ENCODE measurements at regions of chrX and their contacts with region 1.

Region 1: DNA sequence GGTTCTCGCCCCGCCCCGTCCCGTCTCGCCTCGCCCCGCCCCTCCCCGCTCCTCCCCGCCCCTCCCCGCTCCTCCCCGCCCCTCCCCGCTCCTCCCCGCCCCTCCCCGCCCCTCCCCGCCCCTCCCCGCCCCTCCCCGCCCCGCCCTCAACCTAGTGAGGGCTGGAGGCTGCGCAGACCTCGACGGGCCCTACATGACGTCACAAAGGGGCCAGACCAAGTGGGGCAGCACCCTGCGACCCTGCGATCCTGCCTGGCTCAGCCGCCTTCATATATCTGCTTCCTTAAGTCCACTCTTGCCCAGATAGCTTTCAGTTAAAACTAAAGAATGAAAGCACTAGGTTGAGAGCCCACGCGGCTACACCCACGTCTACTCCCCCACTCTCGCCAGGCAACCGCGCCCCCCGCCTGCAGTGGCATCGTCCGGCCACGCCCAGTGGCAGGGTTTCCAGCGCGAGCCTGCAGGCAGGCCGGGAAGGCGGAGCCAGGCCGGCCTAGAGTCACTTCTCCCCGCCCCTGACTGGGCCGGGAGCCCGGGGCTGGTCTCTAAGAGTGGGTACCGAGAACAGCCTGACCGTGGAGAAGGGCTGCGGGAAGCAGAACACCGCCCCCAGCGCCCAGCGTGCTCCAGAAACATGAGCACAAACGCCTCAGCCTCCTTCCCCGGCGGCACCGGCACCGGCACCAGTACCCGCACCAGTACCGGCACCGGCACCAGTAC is 1.5 kb upstream of the MAOA start:
- DNase-seq: peak; percentile 92
- H3K4me3 ChIP-seq: peak overlapping the region; percentile 46
- H3K4me3 Mint-ChIP-seq: peak overlapping the region; percentile 73
- H3K27ac Mint-ChIP-seq: peak overlapping the region; percentile 94
- H3K4me1 ChIP-seq: no peaks in the 10 kb centered on the region
- H3K4me1 Mint-ChIP-seq: no peaks in the 10 kb centered on the region
- H3K27me3 ChIP-seq: no peaks in the 10 kb centered on the region
- H3K27me3 Mint-ChIP-seq: no peaks in the 10 kb centered on the region
- CTCF ChIP-seq: peak in 1 of 2 experiments; percentile 33

Region 2: DNA sequence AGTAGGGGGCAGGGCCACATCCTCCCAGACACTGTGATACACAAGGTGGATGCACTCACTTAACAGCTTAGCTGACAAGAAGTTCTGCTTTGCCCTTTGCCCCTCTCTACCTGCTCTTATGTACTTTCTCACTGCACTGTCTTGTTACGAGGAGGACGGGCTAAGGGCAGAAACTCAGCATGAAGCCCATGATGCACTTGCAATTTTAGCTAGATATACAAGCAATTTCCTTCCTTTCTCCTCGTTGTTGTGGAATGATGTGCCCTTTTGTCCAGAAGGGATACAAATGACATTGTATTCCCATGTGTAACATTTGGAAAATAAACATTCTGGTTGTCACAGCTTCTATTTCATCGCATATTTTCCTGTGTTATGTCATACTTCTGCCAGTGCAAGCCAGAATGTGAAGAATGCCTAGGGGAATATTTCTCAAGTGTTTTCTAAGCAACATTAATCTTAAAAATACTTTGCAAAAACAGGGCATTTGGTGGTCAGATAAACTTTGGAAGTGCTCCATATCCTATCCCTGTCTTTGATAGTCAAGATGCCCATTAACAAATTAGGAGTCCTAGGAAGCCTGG is 48.7 kb after region 1 on chrX:
- CTCF ChIA-PET with region 1: no interaction called
- POLR2A ChIA-PET with region 1: no interaction called
- intact Hi-C with region 1: loop called (anchors 10 kb)
- DNase-seq: peak; percentile 32 to 46
- H3K4me3 ChIP-seq: no peak overlapping the region
- H3K4me3 Mint-ChIP-seq: peak overlapping the region; percentile 35
- H3K27ac Mint-ChIP-seq: peak overlapping the region; percentile 1
- H3K4me1 ChIP-seq: peaks cover 8% of the 10 kb centered on the region
- H3K4me1 Mint-ChIP-seq: peaks cover 8% of the 10 kb centered on the region
- H3K27me3 ChIP-seq: no peaks in the 10 kb centered on the region
- H3K27me3 Mint-ChIP-seq: no peaks in the 10 kb centered on the region
- CTCF ChIP-seq: no peak

Region 3: DNA sequence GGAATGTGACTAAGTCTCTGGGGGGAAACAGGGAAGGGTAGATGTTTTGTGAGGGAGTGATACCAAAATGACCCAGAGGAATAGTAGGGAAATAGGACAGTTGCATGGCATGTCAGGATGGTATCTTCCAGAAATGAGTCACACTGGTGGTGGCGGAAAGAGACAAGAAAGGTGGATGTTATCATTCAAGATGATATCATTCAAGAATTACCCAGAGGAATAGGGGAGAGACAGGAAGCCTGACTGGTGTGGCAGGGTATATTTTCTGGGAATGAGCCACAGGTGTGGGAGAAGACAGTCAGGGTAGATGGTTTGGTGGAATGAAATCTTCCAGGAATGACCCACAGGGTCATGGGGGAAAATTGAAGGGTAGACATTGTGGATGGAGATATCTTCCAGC is 62.6 kb after region 1 on chrX:
- CTCF ChIA-PET with region 1: no interaction called
- POLR2A ChIA-PET with region 1: no interaction called
- intact Hi-C with region 1: no loop called
- DNase-seq: no peak
- H3K4me3 ChIP-seq: no peak overlapping the region
- H3K4me3 Mint-ChIP-seq: no peak overlapping the region
- H3K27ac Mint-ChIP-seq: no peak overlapping the region
- H3K4me1 ChIP-seq: no peaks in the 10 kb centered on the region
- H3K4me1 Mint-ChIP-seq: no peaks in the 10 kb centered on the region
- H3K27me3 ChIP-seq: no peaks in the 10 kb centered on the region
- H3K27me3 Mint-ChIP-seq: no peaks in the 10 kb centered on the region
- CTCF ChIP-seq: no peak

Region 4: DNA sequence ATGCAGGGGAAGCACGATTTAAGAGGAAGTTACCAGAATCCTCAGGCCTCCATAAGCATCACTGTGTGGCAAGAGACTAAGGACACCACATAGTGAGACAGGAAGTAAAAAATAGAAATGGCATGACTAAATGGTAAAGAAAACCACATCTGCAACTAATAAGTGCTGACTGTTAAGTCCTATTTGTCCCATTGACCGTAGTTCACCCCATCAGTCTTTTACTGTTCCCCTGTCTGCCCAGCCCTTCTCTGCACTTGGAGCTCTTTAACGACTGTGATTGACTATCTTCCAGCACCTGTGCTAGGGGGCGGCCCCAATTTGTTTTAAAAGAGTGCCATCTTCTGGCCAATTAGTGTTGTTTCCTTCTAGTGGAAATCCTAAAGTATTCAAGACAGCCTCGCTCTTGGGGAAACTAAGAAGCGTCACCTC is 95.7 kb after region 1 on chrX:
- CTCF ChIA-PET with region 1: interaction called, 3 read pairs
- POLR2A ChIA-PET with region 1: no interaction called
- intact Hi-C with region 1: loop called (anchors 5 kb)
- DNase-seq: peak; percentile 45 to 46
- H3K4me3 ChIP-seq: no peak overlapping the region
- H3K4me3 Mint-ChIP-seq: no peak overlapping the region
- H3K27ac Mint-ChIP-seq: no peak overlapping the region
- H3K4me1 ChIP-seq: no peaks in the 10 kb centered on the region
- H3K4me1 Mint-ChIP-seq: no peaks in the 10 kb centered on the region
- H3K27me3 ChIP-seq: no peaks in the 10 kb centered on the region
- H3K27me3 Mint-ChIP-seq: no peaks in the 10 kb centered on the region
- CTCF ChIP-seq: peak; percentile 26 to 53

Measured in Caco-2 (cell line).